IMR-90 (cell line): ENCODE measurements at regions of chr6 and their contacts with region 1.

Region 1: GRCh38 chr6:110873981-110874879 is at the start of gene AMD1:
- DNase-seq: peak; percentile 98
- ATAC-seq: peak; percentile 71
- H3K4me3 ChIP-seq: peak within 1 kb of the TSS; percentile 66
- H3K27ac ChIP-seq: peak within 1 kb of the TSS; percentile 92
- H3K4me1 ChIP-seq: peaks cover 1% of the 10 kb centered on the region; the same call in 1 of the 2 replicates
- H3K27me3 ChIP-seq: no peaks in the 10 kb centered on the region
- CTCF ChIP-seq: no peak
- POLR2A ChIP-seq: peak; percentile 100
- RAD21 ChIP-seq: 0 out of 2 replicates have a peak, but pooled peaks have one; percentile 14
- total RNA-seq, gene AMD1: 65.8 and 117 TPM in 2 replicates

Region 2: GRCh38 chr6:110528101-110528929 is 345.9 kb before region 1 on chr6:
- CTCF ChIA-PET with region 1: interaction called, 9 read pairs
- POLR2A ChIA-PET with region 1: interaction called, 3 read pairs
- dilution Hi-C with region 1: no loop called
- in situ Hi-C with region 1: no loop called
- intact Hi-C with region 1: loop called (anchors 1 kb)
- DNase-seq: peak; percentile 88
- ATAC-seq: peak; percentile 87
- H3K4me3 ChIP-seq: no peak overlapping the region
- H3K27ac ChIP-seq: peak overlapping the region; percentile 73
- H3K4me1 ChIP-seq: peaks cover 13% of the 10 kb centered on the region
- H3K27me3 ChIP-seq: no peaks in the 10 kb centered on the region
- CTCF ChIP-seq: peak; percentile 86
- POLR2A ChIP-seq: no peak
- RAD21 ChIP-seq: peak; percentile 86

Region 3: GRCh38 chr6:110682460-110682853 is 191.8 kb before region 1 on chr6:
- CTCF ChIA-PET with region 1: interaction called, 4 read pairs
- POLR2A ChIA-PET with region 1: interaction called, 3 read pairs
- dilution Hi-C with region 1: no loop called
- in situ Hi-C with region 1: no loop called
- intact Hi-C with region 1: loop called (anchors 1 kb)
- DNase-seq: peak; percentile 81
- ATAC-seq: peak; percentile 95
- H3K4me3 ChIP-seq: no peak overlapping the region
- H3K27ac ChIP-seq: no peak overlapping the region
- H3K4me1 ChIP-seq: peaks cover 3% of the 10 kb centered on the region; the same call in 1 of the 2 replicates
- H3K27me3 ChIP-seq: no peaks in the 10 kb centered on the region
- CTCF ChIP-seq: peak; percentile 77
- POLR2A ChIP-seq: no peak
- RAD21 ChIP-seq: peak; percentile 89

Region 4: GRCh38 chr6:110703010-110703905 is 171.0 kb before region 1 on chr6:
- CTCF ChIA-PET with region 1: no interaction called
- POLR2A ChIA-PET with region 1: no interaction called
- dilution Hi-C with region 1: no loop called
- in situ Hi-C with region 1: no loop called
- intact Hi-C with region 1: loop called (anchors 5 kb)
- DNase-seq: peak; percentile 32
- ATAC-seq: no peak
- H3K4me3 ChIP-seq: no peak overlapping the region
- H3K27ac ChIP-seq: no peak overlapping the region
- H3K4me1 ChIP-seq: peaks cover 7% of the 10 kb centered on the region
- H3K27me3 ChIP-seq: no peaks in the 10 kb centered on the region
- CTCF ChIP-seq: no peak
- POLR2A ChIP-seq: no peak
- RAD21 ChIP-seq: no peak

Region 5: DNA sequence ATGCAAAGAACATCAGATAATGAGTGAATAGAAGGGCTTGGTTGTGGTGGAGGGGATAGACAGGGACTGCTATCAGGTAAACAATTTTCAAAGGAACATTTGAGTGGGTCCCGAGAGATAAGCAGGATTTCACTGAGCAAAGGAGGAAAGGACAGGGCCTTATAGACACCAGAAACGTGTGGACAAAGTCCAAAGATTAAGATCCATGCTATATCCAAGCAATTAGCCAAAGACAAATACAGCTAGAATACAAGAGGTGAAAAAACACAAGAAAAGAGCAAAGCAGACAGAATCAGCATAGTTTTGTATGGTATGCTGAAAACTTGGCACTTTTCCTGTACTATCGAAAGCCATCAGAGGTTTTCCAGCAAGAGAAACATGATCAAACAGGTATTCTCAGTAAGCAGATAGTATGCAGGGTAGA is 118.8 kb before region 1 on chr6:
- CTCF ChIA-PET with region 1: no interaction called
- POLR2A ChIA-PET with region 1: no interaction called
- dilution Hi-C with region 1: no loop called
- in situ Hi-C with region 1: no loop called
- intact Hi-C with region 1: no loop called
- DNase-seq: peak; percentile 16
- ATAC-seq: no peak
- H3K4me3 ChIP-seq: no peak overlapping the region
- H3K27ac ChIP-seq: no peak overlapping the region
- H3K4me1 ChIP-seq: no peaks in the 10 kb centered on the region
- H3K27me3 ChIP-seq: no peaks in the 10 kb centered on the region
- CTCF ChIP-seq: no peak
- POLR2A ChIP-seq: no peak
- RAD21 ChIP-seq: no peak

Region 6: DNA sequence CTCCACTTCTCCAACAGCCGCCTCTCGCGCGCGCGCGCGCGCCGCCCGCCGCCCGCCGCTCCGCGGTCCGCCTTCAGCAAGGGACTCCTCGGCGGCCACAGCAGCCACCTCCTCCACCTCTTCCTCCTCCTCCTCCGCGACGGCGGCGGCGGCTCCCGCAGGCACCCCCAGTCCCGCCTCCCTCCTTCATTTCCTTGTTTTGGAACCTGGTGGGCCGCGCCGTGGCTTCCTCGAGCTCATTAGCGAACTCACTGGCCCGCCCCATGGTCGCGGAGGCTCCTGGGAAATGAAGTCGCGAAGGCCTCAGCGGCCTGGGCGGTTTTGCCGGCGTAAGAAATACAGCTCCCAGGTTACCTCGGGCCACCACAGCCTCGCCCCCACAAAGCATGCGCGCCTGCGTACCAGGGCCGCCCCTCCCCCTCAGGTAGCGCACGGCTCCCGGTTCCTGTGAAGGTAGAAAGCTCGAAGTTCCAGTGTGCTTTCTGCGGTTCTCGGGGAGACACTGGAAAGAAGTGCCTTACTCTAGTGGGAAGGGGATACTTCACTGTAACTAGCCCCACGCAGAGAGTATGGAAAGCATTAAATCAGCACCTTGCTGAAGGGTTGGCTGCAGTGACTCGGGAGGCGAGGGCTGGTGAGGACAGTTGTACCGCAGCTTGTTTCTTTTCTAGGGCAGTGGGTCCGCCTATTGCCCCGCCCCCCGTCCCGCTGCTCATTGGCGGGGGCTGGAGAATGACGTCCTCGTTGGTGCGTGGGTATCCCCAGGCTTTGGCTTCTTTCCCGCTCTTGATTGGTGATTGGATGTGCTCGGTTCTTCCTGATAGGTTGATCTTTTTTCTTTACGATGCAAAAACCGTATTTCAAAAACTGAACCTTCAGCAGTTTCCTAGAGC is 58.8 kb before region 1 on chr6 and contains the start of gene CDK19:
- CTCF ChIA-PET with region 1: no interaction called
- POLR2A ChIA-PET with region 1: interaction called, 8 read pairs
- dilution Hi-C with region 1: no loop called
- in situ Hi-C with region 1: loop called (anchors 5 kb)
- intact Hi-C with region 1: loop called (anchors 1 kb)
- DNase-seq: peak; percentile 98
- ATAC-seq: peak; percentile 91
- H3K4me3 ChIP-seq: peak within 1 kb of the TSS; percentile 59
- H3K27ac ChIP-seq: peak within 1 kb of the TSS; percentile 89
- H3K4me1 ChIP-seq: no peaks in the 10 kb centered on the region; the same call in 1 of the 2 replicates
- H3K27me3 ChIP-seq: no peaks in the 10 kb centered on the region
- CTCF ChIP-seq: no peak
- POLR2A ChIP-seq: peak; percentile 86
- RAD21 ChIP-seq: 0 out of 2 replicates have a peak, but pooled peaks have one; percentile 2
- total RNA-seq, gene CDK19: 6.8 and 7.5 TPM in 2 replicates

Region 7: GRCh38 chr6:110944681-110945151 is 70.5 kb after region 1 on chr6:
- CTCF ChIA-PET with region 1: interaction called, 3 read pairs
- POLR2A ChIA-PET with region 1: interaction called, 4 read pairs
- dilution Hi-C with region 1: no loop called
- in situ Hi-C with region 1: no loop called
- intact Hi-C with region 1: loop called (anchors 2 kb)
- DNase-seq: peak; percentile 93
- ATAC-seq: peak; percentile 94
- H3K4me3 ChIP-seq: no peak overlapping the region
- H3K27ac ChIP-seq: peak overlapping the region; percentile 25; the same call in 1 of the 2 replicates
- H3K4me1 ChIP-seq: peaks cover 5% of the 10 kb centered on the region; the same call in 1 of the 2 replicates
- H3K27me3 ChIP-seq: no peaks in the 10 kb centered on the region
- CTCF ChIP-seq: no peak
- POLR2A ChIP-seq: no peak
- RAD21 ChIP-seq: no peak

Region 8: GRCh38 chr6:110949679-110950285 is 75.6 kb after region 1 on chr6:
- CTCF ChIA-PET with region 1: interaction called, 6 read pairs
- POLR2A ChIA-PET with region 1: interaction called, 4 read pairs
- dilution Hi-C with region 1: no loop called
- in situ Hi-C with region 1: loop called (anchors 5 kb)
- intact Hi-C with region 1: loop called (anchors 2 kb)
- DNase-seq: peak; percentile 54
- ATAC-seq: no peak
- H3K4me3 ChIP-seq: no peak overlapping the region
- H3K27ac ChIP-seq: no peak overlapping the region
- H3K4me1 ChIP-seq: peaks cover 15% of the 10 kb centered on the region
- H3K27me3 ChIP-seq: no peaks in the 10 kb centered on the region
- CTCF ChIP-seq: peak; percentile 66
- POLR2A ChIP-seq: no peak
- RAD21 ChIP-seq: peak; percentile 53

Region 9: GRCh38 chr6:110981202-110981600 is 107.0 kb after region 1 on chr6:
- CTCF ChIA-PET with region 1: no interaction called
- POLR2A ChIA-PET with region 1: no interaction called
- dilution Hi-C with region 1: no loop called
- in situ Hi-C with region 1: no loop called
- intact Hi-C with region 1: no loop called
- DNase-seq: no peak
- ATAC-seq: no peak
- H3K4me3 ChIP-seq: peak overlapping the region; percentile 97
- H3K27ac ChIP-seq: peak overlapping the region; percentile 2
- H3K4me1 ChIP-seq: peaks cover 3% of the 10 kb centered on the region; the same call in 1 of the 2 replicates
- H3K27me3 ChIP-seq: no peaks in the 10 kb centered on the region
- CTCF ChIP-seq: no peak
- POLR2A ChIP-seq: no peak
- RAD21 ChIP-seq: no peak

Region 10: DNA sequence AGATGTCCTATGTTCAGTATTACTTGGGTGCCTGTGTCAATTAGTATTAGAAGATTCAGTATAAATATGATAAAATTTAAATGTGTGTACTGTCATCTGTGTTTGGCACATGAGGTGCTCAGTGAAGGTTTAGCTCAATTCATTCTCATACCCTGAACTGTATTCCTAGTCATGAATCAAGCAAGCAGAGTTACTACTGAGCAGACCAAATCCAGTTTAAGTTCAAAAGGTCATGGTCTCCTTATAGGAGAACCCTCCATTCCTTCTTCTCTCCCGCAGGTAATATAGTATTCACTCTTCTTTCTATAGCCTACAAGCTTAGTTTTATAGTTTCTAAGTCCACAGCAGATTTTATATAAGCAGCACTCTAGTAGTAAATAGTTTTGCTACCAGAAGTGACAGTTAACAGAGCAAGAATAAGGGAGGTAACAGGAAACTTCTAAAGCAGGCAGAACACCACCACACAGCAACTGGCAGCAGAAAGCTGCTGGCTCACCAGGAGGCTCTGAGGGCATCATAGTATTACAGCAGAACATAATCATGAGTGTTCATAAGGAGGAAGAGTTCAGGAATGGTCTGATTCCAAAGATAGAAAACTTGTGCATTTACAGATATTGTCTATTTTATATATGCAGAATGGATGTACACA is 346.3 kb after region 1 on chr6:
- CTCF ChIA-PET with region 1: no interaction called
- POLR2A ChIA-PET with region 1: no interaction called
- dilution Hi-C with region 1: no loop called
- in situ Hi-C with region 1: no loop called
- intact Hi-C with region 1: no loop called
- DNase-seq: no peak
- ATAC-seq: no peak
- H3K4me3 ChIP-seq: no peak overlapping the region
- H3K27ac ChIP-seq: no peak overlapping the region
- H3K4me1 ChIP-seq: no peaks in the 10 kb centered on the region
- H3K27me3 ChIP-seq: no peaks in the 10 kb centered on the region
- CTCF ChIP-seq: no peak
- POLR2A ChIP-seq: no peak
- RAD21 ChIP-seq: no peak